ENCODE measurements at regions of chr6 and their contacts with region 1.

Region 1: GRCh38 chr6:56570413-56571359 is 72.0 kb downstream of the DST start:
- DNase-seq: peak; percentile 4
- ATAC-seq: peak; percentile 64
- H3K4me3 Mint-ChIP-seq: no peak overlapping the region
- H3K27ac Mint-ChIP-seq: no peak overlapping the region
- H3K4me1 Mint-ChIP-seq: no peaks in the 10 kb centered on the region
- H3K27me3 Mint-ChIP-seq: peaks cover 2% of the 10 kb centered on the region
- CTCF ChIP-seq: peak; percentile 52

Region 2: DNA sequence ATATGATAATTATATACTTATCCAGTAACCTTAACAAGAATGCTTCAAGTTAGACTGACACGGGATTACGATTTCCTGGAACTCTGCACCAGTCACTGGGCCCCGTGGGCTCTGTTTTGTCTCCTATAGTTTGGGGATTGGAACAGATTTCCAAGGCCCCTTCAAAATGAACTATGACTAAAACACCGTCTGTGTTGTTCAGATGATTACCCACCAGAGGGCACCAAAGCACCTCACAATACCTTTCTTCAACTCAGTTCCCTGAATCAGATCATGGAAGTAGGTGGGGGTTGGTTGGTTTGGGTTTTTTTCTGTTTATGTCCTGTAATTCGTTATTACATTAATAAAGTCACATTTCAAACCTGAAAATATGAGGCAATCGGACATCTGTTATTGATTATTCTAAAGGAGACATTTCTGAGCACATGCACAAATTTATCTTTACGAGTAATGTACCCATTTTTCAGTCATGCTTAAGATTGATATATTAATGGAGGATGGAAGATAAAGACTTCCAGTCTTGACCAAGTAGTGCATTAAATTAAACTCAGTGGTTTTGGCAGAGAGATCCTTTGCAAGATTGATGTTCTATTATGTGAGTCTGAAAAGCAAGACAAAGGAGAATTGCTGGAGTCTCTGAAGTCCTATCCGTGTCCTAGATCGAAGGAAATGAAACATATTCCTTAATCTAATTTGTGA is 211.3 kb before region 1 on chr6:
- CTCF ChIA-PET with region 1: interaction called, 23 read pairs
- POLR2A ChIA-PET with region 1: no interaction called
- intact Hi-C with region 1: no loop called
- DNase-seq: peak; percentile 73
- ATAC-seq: peak; percentile 76
- H3K4me3 Mint-ChIP-seq: no peak overlapping the region
- H3K27ac Mint-ChIP-seq: no peak overlapping the region
- H3K4me1 Mint-ChIP-seq: no peaks in the 10 kb centered on the region
- H3K27me3 Mint-ChIP-seq: no peaks in the 10 kb centered on the region
- CTCF ChIP-seq: peak; percentile 71

Region 3: DNA sequence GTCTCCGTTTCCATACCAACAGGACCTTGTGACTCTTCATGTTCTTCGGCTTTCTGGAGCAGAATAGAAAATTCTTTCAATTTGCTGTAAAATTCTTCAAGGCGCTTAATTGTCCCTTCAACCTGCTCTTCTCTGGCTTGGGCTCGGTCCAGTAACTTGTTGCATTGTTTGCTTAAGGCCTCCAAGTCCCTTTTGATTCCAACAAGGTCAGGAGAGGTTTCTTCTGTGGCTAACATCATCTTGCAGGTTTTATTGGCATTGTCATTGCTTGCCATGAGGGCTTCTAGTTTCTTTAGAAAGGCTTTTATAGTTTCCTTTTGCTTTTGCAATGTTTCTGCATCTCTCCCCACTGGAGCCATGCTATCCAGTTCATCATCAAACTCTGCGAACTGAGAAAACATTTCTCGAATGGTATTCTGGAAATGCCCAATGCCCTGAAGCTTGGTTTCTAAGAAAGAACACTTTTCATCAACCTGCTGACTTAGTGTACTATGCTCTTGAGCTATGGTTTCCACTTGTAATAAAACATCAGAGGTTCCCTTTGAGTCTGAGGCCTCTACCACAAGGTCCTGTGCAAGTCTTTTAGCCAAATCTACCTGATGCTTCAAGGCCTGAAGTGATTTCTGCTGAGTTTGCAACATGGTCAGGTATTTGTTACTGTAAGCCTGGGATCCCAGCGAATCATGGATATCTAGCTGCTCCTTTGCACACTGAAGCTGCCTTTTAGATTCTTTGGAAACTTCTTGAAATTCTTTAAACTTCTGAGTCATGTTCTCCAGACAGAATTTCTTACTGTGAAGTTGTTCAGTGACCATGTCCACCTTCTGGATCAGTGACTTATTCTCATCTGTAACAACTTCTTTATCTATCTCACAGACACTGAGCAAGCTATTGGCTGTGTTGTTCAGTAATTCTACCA is 18.2 kb before region 1 on chr6:
- CTCF ChIA-PET with region 1: interaction called, 12 read pairs
- POLR2A ChIA-PET with region 1: no interaction called
- intact Hi-C with region 1: no loop called
- DNase-seq: no peak
- ATAC-seq: no peak
- H3K4me3 Mint-ChIP-seq: no peak overlapping the region
- H3K27ac Mint-ChIP-seq: no peak overlapping the region
- H3K4me1 Mint-ChIP-seq: peaks cover 2% of the 10 kb centered on the region
- H3K27me3 Mint-ChIP-seq: no peaks in the 10 kb centered on the region
- CTCF ChIP-seq: no peak

Region 4: DNA sequence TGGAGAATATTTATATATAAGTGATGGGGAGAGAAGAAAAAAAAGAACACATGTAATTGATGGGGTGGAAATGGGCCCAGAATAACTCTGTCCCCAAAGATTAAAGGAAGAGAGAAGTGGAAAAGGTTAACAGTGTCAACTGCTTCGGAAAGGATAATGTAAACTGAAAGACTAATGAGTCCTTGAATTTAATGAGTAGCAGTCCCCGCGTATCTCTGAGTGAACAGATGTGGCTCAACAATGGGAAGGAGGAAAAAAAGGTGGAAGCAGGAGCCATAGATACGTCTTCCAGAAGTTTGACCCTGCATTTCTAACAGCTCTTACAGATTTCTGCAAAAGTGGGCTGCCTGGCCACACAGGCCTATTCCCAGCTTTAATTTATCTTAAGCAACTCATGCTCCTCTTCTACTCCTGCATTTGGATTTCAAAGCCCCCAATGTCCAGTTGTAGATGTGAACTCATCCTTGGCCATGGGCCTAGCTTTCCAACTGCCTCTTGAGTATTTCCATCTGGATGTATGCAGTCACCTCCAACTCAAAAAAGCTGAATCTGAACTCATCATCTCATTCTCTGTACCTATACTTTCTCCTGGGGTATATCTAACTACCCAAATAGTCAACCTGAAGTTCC is 10.7 kb after region 1 on chr6:
- CTCF ChIA-PET with region 1: interaction called, 23 read pairs
- POLR2A ChIA-PET with region 1: no interaction called
- intact Hi-C with region 1: no loop called
- DNase-seq: no peak
- ATAC-seq: no peak
- H3K4me3 Mint-ChIP-seq: no peak overlapping the region
- H3K27ac Mint-ChIP-seq: no peak overlapping the region
- H3K4me1 Mint-ChIP-seq: no peaks in the 10 kb centered on the region
- H3K27me3 Mint-ChIP-seq: no peaks in the 10 kb centered on the region
- CTCF ChIP-seq: no peak

Region 5: DNA sequence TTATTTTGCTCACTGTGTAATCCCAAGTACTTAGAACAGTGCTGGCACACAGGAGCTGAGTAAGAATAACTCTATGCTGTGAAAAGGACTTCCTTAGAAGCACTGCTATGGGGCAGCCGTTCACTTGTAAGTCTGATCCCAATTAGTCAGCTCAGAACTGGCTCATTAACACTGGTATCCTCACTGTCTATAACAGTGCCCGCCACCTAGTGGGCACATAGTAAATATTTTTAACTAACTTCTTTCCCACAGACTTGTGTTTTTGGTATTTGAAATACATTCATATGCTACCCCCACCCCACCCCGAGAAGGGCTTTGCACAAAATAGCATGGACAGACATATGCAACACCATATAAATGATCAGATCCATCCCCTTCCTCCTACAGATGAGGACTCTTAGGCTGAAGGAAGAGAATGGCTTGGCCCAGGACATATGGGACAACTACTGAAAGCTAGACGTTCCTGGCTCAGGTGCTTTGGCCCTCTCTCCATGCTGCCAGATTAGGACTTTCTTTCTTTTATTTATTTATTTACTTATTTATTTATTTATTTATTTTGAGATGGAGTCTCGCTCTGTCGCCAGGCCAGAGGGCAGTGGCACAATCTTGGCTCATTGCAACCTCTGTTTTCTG is 24.9 kb after region 1 on chr6:
- CTCF ChIA-PET with region 1: interaction called, 11 read pairs
- POLR2A ChIA-PET with region 1: no interaction called
- intact Hi-C with region 1: no loop called
- DNase-seq: peak; percentile 58
- ATAC-seq: peak; percentile 74
- H3K4me3 Mint-ChIP-seq: no peak overlapping the region
- H3K27ac Mint-ChIP-seq: no peak overlapping the region
- H3K4me1 Mint-ChIP-seq: peaks cover 23% of the 10 kb centered on the region
- H3K27me3 Mint-ChIP-seq: peaks cover 4% of the 10 kb centered on the region
- CTCF ChIP-seq: peak; percentile 70